ENCODE measurements at regions of chr9 and their contacts with region 1.

Region 1: GRCh38 chr9:128034821-128035764 is 32.0 kb downstream of the NAIF1 start:
- DNase-seq: peak; percentile 92
- H3K4me3 Mint-ChIP-seq: no peak overlapping the region
- H3K27ac Mint-ChIP-seq: peak overlapping the region; percentile 9
- H3K4me1 Mint-ChIP-seq: peaks cover 30% of the 10 kb centered on the region
- H3K27me3 Mint-ChIP-seq: no peaks in the 10 kb centered on the region

Region 2: DNA sequence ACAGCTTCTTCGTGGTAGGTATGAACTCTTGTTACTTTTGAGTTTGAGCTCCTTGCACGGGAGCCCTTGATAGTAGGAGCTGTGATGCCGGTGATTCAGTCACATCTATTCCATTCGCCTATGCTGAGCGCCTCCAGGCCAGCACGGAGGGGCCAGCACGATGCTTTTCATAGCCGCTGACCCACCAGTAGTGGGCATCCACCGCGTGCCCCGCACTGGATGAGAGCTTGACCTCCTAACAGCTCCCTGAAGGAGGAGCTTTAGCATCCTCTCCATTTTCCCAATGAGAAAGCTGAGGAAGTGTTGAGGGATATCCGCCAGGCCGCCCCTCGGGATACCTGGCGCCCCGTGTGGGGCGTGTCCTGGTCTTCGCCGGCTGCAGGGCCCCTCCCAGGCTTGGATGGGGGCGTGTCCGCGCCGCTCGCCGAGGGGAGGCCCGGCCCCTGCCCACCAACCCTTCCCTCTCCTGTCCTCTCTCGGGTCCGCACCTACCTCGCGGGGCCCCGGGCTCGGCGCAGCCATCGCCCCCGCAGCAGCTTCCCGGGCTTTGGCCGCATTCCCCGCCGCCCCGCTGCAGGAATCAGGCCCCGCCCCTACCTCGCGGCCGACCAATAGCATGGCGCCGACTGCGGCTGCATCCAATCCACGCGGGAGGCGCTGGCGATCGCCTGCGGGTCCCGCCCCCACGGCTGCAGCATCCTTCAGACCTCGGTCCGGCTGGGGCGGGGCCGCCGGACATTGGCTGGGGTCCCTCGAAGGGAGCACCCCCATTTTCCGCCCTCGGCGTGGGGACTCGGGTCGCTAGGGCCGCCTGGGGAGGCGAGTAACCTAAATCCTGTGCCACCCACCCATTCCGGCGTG is 104.6 kb before region 1 on chr9 and contains the start of gene PIP5KL1:
- intact Hi-C with region 1: no loop called
- DNase-seq: peak; percentile 95
- H3K4me3 Mint-ChIP-seq: peak within 1 kb of the TSS; percentile 82
- H3K27ac Mint-ChIP-seq: peak within 1 kb of the TSS; percentile 70
- H3K4me1 Mint-ChIP-seq: peaks cover 28% of the 10 kb centered on the region
- H3K27me3 Mint-ChIP-seq: peaks cover 9% of the 10 kb centered on the region
- total RNA-seq, gene PIP5KL1: 0.89 and 0.90 TPM in 2 replicates

Region 3: GRCh38 chr9:127943731-127944144 is 91.4 kb before region 1 on chr9:
- intact Hi-C with region 1: loop called (anchors 1 kb)
- DNase-seq: peak; percentile 93
- H3K4me3 Mint-ChIP-seq: no peak overlapping the region
- H3K27ac Mint-ChIP-seq: peak overlapping the region; percentile 80
- H3K4me1 Mint-ChIP-seq: peaks cover 17% of the 10 kb centered on the region
- H3K27me3 Mint-ChIP-seq: no peaks in the 10 kb centered on the region

Region 4: DNA sequence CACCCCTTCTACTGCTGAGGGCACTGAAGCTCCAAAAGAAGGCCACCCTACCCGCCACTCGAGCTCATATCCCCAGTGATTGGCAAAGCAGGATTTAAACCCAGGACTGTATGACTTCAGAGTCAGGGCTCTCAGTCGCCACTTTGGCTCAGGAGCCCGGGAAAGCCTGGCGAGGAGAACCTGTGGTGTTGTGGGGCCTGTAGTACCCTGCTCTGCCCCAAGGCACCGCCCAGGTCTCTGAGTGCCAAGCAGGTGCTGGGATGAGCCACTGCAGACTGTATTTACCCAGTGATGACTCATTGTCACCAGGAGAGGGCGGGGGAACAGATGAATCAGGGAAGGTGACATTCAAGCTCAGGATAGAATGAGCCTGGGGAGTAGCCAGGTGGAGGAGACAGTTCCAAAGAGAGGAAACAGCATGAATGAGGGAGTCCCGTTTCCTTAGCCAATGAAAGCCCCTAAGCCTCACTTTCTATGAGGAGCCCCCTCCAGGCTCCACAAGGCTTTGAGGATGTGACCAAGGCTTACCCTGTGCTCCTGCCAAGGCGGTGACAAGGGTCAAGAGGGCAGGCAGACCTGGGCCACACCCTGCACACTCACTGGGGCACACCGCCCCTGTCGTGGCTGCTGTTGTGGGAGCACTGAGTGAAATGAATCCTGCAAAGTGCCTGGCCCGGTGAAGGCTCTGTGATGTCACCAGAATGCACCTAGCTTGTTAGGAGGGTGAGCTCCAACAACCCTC is 79.6 kb before region 1 on chr9:
- intact Hi-C with region 1: loop called (anchors 1 kb)
- DNase-seq: peak; percentile 89
- H3K4me3 Mint-ChIP-seq: peak overlapping the region; percentile 42
- H3K27ac Mint-ChIP-seq: peak overlapping the region; percentile 72
- H3K4me1 Mint-ChIP-seq: peaks cover 71% of the 10 kb centered on the region
- H3K27me3 Mint-ChIP-seq: no peaks in the 10 kb centered on the region

Region 5: GRCh38 chr9:128007566-128008138 is 27.4 kb before region 1 on chr9:
- intact Hi-C with region 1: no loop called
- DNase-seq: peak; percentile 93
- H3K4me3 Mint-ChIP-seq: peak overlapping the region; percentile 80
- H3K27ac Mint-ChIP-seq: peak overlapping the region; percentile 93
- H3K4me1 Mint-ChIP-seq: peaks cover 35% of the 10 kb centered on the region
- H3K27me3 Mint-ChIP-seq: no peaks in the 10 kb centered on the region

Region 6: DNA sequence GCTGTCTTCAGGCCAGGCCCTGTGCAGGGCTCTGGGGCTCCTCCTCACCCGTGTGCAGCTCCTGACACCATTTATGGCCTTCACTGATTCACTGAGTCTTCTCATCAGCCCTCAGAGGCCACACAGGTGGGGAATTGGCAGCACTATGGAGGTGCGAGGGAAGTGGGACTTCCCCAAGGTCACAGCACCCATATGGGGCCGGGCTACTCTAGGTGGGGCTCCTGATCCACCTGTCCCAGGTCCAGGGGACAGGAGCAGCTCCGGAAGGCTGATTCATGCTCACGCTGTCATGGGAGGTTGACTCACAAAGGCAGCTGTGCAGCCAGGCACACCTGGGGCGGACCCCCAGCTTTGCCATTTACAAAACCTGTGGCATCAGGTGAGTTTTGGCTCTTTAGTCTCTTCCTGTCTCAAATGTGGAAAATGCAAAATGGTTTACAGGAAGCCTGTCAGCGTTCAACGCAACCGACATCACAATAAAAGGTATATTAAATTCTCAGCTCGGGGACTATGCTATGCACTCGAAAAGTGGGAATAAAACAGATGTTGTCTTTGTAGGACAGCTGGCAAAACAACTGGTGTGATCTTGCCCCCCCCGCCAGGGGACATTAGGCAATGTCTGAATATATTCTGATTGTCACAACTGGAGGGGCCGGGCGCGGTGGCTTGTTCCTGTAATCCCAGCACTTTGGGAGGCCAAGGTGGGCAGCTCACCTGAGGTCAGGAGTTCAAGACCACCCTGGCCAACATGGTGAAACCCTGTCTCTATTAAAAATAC is 17.0 kb after region 1 on chr9:
- intact Hi-C with region 1: no loop called
- DNase-seq: no peak
- H3K4me3 Mint-ChIP-seq: no peak overlapping the region
- H3K27ac Mint-ChIP-seq: no peak overlapping the region
- H3K4me1 Mint-ChIP-seq: peaks cover 2% of the 10 kb centered on the region
- H3K27me3 Mint-ChIP-seq: peaks cover 6% of the 10 kb centered on the region

Region 7: GRCh38 chr9:128081056-128081455 is 46.0 kb after region 1 on chr9:
- intact Hi-C with region 1: loop called (anchors 5 kb)
- DNase-seq: no peak
- H3K4me3 Mint-ChIP-seq: no peak overlapping the region
- H3K27ac Mint-ChIP-seq: peak overlapping the region; percentile 20
- H3K4me1 Mint-ChIP-seq: peaks cover 40% of the 10 kb centered on the region
- H3K27me3 Mint-ChIP-seq: no peaks in the 10 kb centered on the region

Region 8: DNA sequence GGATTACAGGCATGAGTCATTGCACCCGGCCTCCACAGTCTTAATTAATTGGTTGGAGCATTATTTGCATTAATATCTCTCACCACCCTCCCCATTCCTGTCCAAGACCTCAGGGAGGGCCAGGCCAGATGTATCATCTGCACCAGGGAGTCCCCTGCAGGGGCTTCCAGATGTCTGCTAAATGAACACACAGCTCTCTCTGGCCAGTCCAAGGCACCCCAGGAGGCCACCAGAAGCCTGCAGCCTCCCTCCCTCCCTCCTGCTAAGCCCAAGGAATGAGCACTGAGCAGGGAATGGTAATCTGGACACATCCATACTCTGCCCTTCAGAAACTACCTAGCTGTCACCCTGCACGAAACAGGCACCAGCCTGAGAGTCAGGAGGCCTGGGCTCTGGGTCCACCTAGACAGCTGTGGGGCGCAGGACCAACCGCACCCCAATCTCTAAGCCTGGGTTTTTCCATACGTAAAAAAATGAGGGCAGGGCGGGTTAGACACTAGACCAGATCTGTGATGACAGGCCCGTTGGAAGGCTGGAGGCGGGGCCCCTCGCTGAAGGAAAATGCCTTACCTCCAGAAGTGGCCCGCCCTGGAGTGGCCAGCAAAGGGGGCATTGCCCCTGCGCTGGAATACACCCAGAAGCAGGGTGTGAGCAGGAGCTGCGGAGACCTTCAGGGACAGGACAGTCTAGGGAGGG is 147.9 kb after region 1 on chr9:
- intact Hi-C with region 1: no loop called
- DNase-seq: no peak
- H3K4me3 Mint-ChIP-seq: no peak overlapping the region
- H3K27ac Mint-ChIP-seq: no peak overlapping the region
- H3K4me1 Mint-ChIP-seq: peaks cover 8% of the 10 kb centered on the region
- H3K27me3 Mint-ChIP-seq: no peaks in the 10 kb centered on the region

Measured in activated CD4-positive, alpha-beta T cell treated with anti-CD3 and anti-CD28 coated beads, Interleukin-2, amount 10 ng/mL, durations not matched to agents 24 days and 14 days (primary cell).